ENCODE measurements at regions of chr7 and their contacts with region 1.

Region 1: GRCh38 chr7:141014524-141015395 is at the start of gene MRPS33:
- DNase-seq: peak; percentile 93 to 98 (median 97)
- H3K4me3 ChIP-seq: peak within 1 kb of the TSS in 3 of 4 donors; percentile 25 to 76 (median 61)
- H3K27ac ChIP-seq: peak within 1 kb of the TSS; percentile 37 to 97 (median 80)
- H3K4me1 ChIP-seq: peaks cover 8 to 12% of the 10 kb centered on the region in 2 donors
- H3K27me3 ChIP-seq: peaks cover 6% of the 10 kb centered on the region
- CTCF ChIP-seq: peak in 3 of 6 experiments; percentile 3 to 30 (median 13)
- POLR2A ChIP-seq: peak; percentile 72 to 76
- total RNA-seq, gene MRPS33: 19.7 to 145 (median 58.8) TPM

Region 2: DNA sequence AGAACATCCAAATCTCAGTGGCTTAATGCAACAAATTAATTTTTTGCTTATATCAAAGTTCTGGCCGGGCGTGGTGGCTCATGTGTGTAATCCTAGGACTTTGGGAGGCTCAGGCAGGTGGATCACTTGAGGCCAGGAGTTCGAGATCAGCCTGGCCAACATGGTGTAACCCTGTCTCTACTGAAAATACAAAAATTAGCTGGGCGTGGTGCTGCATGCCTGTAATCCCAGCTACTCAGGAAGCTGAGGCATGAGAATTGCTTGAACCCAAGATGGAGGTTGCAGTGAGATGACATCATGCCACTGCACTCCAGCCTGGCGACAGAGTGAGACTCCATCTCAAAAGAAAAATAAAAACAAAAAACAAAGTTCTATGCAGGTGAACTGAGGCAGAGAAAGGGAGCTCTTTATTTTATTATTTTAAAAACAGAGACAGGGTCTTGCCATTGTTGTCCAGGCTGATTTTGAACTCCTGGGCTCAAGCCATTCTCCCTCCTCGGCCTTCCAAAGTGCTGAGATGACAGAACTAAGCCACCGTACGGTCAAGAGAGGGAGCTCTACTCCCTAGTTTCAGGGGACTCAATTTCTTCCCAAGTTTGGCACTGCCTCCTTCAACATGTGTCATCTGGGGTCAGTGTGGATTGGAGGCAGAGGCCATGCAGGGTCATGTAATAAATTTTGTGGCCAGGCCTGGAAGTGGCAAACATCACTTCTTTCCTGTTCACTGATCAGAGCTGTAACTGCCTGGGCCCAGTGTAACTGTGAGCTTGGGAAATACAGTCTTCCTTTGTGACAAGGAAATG is 339.7 kb before region 1 on chr7:
- intact Hi-C with region 1: loop called in 1 of 2 experiments (anchors 5 kb)
- DNase-seq: peak; percentile 54 to 91 (median 80)
- H3K4me3 ChIP-seq: no peak overlapping the region
- H3K27ac ChIP-seq: no peak overlapping the region
- H3K4me1 ChIP-seq: peaks cover 0 to 13% of the 10 kb centered on the region in 2 donors
- H3K27me3 ChIP-seq: no peaks in the 10 kb centered on the region
- CTCF ChIP-seq: peak; percentile 37 to 65 (median 52)
- POLR2A ChIP-seq: no peak

Region 3: GRCh38 chr7:140810830-140811556 is 203.8 kb before region 1 on chr7:
- intact Hi-C with region 1: loop called (anchors 5 kb)
- DNase-seq: peak; percentile 59 to 85 (median 67)
- H3K4me3 ChIP-seq: no peak overlapping the region
- H3K27ac ChIP-seq: no peak overlapping the region
- H3K4me1 ChIP-seq: peaks cover 0 to 17% of the 10 kb centered on the region in 2 donors
- H3K27me3 ChIP-seq: no peaks in the 10 kb centered on the region
- CTCF ChIP-seq: peak; percentile 54 to 89 (median 78)
- POLR2A ChIP-seq: no peak